Tibial artery (tissue), 4 donors: ENCODE measurements at regions of chr16 and their contacts with region 1.

Region 1: GRCh38 chr16:66830422-66831404 is at the start of gene NAE1:
- DNase-seq: peak; percentile 71 to 89
- H3K4me3 ChIP-seq: peak within 1 kb of the TSS; percentile 75 to 96
- H3K27ac ChIP-seq: peak within 1 kb of the TSS; percentile 91 to 97
- H3K4me1 ChIP-seq: peaks cover 0 to 21% (median 15%) of the 10 kb centered on the region in 4 donors
- H3K27me3 ChIP-seq: no peaks in the 10 kb centered on the region
- CTCF ChIP-seq: peak; percentile 97

Region 2: GRCh38 chr16:65024767-65025178 is 1805.9 kb before region 1 on chr16:
- intact Hi-C with region 1: no loop called
- DNase-seq: no peak
- H3K4me3 ChIP-seq: no peak overlapping the region
- H3K27ac ChIP-seq: no peak overlapping the region
- H3K4me1 ChIP-seq: peaks cover 0 to 6% (median 0%) of the 10 kb centered on the region in 4 donors
- H3K27me3 ChIP-seq: no peaks in the 10 kb centered on the region
- CTCF ChIP-seq: no peak

Region 3: DNA sequence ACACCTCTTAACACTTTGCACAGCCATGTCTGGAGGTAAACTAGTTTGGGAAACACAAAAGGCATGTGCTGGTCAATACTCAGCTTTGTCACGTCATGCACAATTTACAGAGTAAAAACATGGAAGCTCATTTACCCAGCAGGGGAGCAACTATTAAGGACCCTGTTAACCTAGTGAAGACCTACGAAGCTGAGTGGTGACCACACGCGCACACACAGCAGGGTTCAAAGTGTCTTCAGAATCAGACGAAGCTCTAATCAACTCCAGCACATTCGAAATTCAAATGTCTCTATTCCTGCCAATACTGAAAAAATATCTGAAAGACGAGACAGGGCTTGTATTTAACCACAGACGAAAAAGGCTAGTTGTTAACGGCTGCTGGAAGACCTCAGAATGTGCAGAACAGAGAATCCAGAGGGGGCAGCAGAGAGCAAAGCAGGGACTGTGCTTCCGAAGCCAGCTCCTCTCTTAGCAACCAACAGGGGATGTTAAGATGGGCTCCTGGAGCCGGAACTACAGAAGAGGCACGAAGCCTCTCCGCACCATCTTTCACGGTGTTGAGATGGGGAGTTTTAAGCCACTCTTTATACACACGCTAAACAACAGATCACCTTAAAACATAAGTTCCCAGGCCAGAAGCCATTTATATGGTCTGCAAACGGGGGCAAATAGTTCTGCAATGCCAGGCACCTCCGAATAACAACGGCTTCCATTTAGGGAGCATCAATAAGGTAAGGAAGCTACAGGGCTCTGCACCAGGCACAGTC is 179.8 kb before region 1 on chr16:
- intact Hi-C with region 1: loop called (anchors 10 kb)
- DNase-seq: peak; percentile 79 to 83
- H3K4me3 ChIP-seq: peak overlapping the region; percentile 17 to 22
- H3K27ac ChIP-seq: no peak overlapping the region
- H3K4me1 ChIP-seq: peaks cover 0 to 11% (median 3%) of the 10 kb centered on the region in 4 donors
- H3K27me3 ChIP-seq: no peaks in the 10 kb centered on the region
- CTCF ChIP-seq: peak; percentile 90 to 99

Region 4: GRCh38 chr16:66717112-66717675 is 113.5 kb before region 1 on chr16:
- intact Hi-C with region 1: no loop called
- DNase-seq: no peak
- H3K4me3 ChIP-seq: no peak overlapping the region
- H3K27ac ChIP-seq: no peak overlapping the region
- H3K4me1 ChIP-seq: peaks cover 0 to 15% (median 6%) of the 10 kb centered on the region in 4 donors
- H3K27me3 ChIP-seq: no peaks in the 10 kb centered on the region
- CTCF ChIP-seq: peak in 1 of 2 experiments; percentile 25

Region 5: GRCh38 chr16:66798161-66798560 is 32.6 kb before region 1 on chr16:
- intact Hi-C with region 1: no loop called
- DNase-seq: no peak
- H3K4me3 ChIP-seq: no peak overlapping the region
- H3K27ac ChIP-seq: no peak overlapping the region
- H3K4me1 ChIP-seq: no peaks in the 10 kb centered on the region
- H3K27me3 ChIP-seq: no peaks in the 10 kb centered on the region
- CTCF ChIP-seq: no peak

Region 6: GRCh38 chr16:66872943-66873684 is 42.4 kb after region 1 on chr16:
- intact Hi-C with region 1: loop called (anchors 5 kb)
- DNase-seq: peak; percentile 88 to 95
- H3K4me3 ChIP-seq: peak overlapping the region; percentile 37 to 45
- H3K27ac ChIP-seq: peak overlapping the region; percentile 68 to 75
- H3K4me1 ChIP-seq: peaks cover 0 to 23% (median 13%) of the 10 kb centered on the region in 4 donors
- H3K27me3 ChIP-seq: no peaks in the 10 kb centered on the region
- CTCF ChIP-seq: peak; percentile 92 to 93

Region 7: GRCh38 chr16:66988197-66988788 is 157.6 kb after region 1 on chr16 and contains the start of gene CES4A:
- intact Hi-C with region 1: no loop called
- DNase-seq: no peak
- H3K4me3 ChIP-seq: no peak within 1 kb of the TSS
- H3K27ac ChIP-seq: no peak within 1 kb of the TSS
- H3K4me1 ChIP-seq: no peaks in the 10 kb centered on the region
- H3K27me3 ChIP-seq: peaks cover 0 to 2% of the 10 kb centered on the region in 2 donors
- CTCF ChIP-seq: no peak